ENCODE measurements at regions of chr6 and their contacts with region 1.

Region 1: GRCh38 chr6:75934643-75935472 is 137.6 kb downstream of the IMPG1 start:
- DNase-seq: peak; percentile 48
- ATAC-seq: peak; percentile 84
- H3K4me3 ChIP-seq: no peak overlapping the region
- H3K27ac ChIP-seq: no peak overlapping the region
- H3K4me1 ChIP-seq: peaks cover 0 to 4% of the 10 kb centered on the region in 2 experiments; a peak in 1 of 4 replicates
- H3K27me3 ChIP-seq: no peaks in the 10 kb centered on the region
- CTCF ChIP-seq: peak; percentile 62 to 87 (median 71)
- POLR2A ChIP-seq: no peak
- RAD21 ChIP-seq: peak; percentile 87

Region 2: DNA sequence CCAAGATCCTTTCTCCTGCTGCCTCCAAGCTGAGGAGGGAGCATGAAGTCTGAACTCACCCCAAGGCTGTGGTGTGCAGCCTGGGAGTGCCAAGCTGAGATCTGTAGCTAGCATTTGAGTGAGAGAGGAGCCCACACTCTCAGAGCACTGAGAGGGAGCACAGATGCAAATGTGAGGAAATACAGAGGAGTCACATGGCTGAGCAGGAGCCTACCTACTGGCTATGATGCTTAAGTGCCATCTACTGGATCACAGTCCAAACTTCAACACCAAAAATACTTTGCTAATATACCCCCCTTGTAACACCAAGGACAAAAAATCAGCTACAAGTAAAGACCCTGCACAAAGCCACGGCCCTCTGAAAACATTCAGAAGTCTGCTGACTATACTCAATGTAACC is 232.0 kb after region 1 on chr6:
- CTCF ChIA-PET with region 1: interaction called, 29 read pairs
- POLR2A ChIA-PET with region 1: no interaction called
- RAD21 ChIA-PET with region 1: interaction called in 1 of 2 experiments, 3 read pairs
- intact Hi-C with region 1: loop called (anchors 2 kb)
- DNase-seq: no peak
- ATAC-seq: peak; percentile 72
- H3K4me3 ChIP-seq: no peak overlapping the region
- H3K27ac ChIP-seq: no peak overlapping the region
- H3K4me1 ChIP-seq: no peaks in the 10 kb centered on the region
- H3K27me3 ChIP-seq: no peaks in the 10 kb centered on the region
- CTCF ChIP-seq: peak in 2 of 3 experiments; percentile 11 to 17; a peak in 3 of 6 replicates
- POLR2A ChIP-seq: no peak
- RAD21 ChIP-seq: peak; percentile 55

Region 3: DNA sequence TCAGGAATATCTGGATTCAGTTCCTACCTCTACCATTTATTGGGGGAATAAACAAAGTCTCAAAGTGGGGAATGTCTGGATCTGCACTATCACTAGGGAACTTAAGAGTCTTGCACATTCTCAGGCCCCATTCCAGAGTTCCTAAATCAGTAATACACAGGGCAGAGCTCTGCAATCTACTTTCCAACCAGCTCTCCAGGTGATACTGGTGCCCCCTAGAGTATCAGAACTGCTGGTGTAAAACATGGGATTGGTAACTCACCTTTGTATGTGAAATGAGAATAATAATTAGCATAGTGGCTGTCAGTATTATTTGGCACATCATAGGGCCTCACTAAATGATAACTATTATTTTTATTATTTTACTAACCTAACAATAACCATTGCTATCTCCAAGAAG is 416.4 kb after region 1 on chr6:
- CTCF ChIA-PET with region 1: interaction called, 7 read pairs
- POLR2A ChIA-PET with region 1: no interaction called
- RAD21 ChIA-PET with region 1: interaction called in 1 of 2 experiments, 3 read pairs
- intact Hi-C with region 1: loop called (anchors 1 kb)
- DNase-seq: peak; percentile 34
- ATAC-seq: peak; percentile 92
- H3K4me3 ChIP-seq: no peak overlapping the region
- H3K27ac ChIP-seq: no peak overlapping the region
- H3K4me1 ChIP-seq: no peaks in the 10 kb centered on the region
- H3K27me3 ChIP-seq: no peaks in the 10 kb centered on the region
- CTCF ChIP-seq: peak; percentile 50 to 73 (median 64); a peak in 5 of 6 replicates
- POLR2A ChIP-seq: no peak
- RAD21 ChIP-seq: peak; percentile 68

Region 4: DNA sequence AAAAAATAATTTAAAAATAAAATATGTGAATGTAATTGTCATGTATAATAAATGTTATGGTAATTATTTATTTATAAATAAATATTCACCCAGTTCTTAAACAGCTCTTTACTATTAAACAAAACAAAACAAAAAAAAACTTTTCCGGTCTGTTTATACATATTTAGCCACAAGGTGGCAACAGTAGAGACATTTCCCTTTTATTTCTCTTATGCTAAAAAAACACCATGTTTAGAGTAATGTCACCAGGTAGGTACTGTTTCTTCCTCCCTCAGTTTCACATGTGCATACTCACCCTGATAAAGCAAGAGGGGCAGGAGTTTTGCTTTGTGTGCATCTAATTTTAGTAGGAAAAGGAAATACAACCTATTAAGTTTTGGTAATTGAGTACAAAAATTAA is 748.0 kb after region 1 on chr6:
- CTCF ChIA-PET with region 1: interaction called, 7 read pairs
- POLR2A ChIA-PET with region 1: no interaction called
- RAD21 ChIA-PET with region 1: no interaction called
- intact Hi-C with region 1: loop called (anchors 10 kb)
- DNase-seq: peak; percentile 12
- ATAC-seq: no peak
- H3K4me3 ChIP-seq: no peak overlapping the region
- H3K27ac ChIP-seq: no peak overlapping the region
- H3K4me1 ChIP-seq: no peaks in the 10 kb centered on the region
- H3K27me3 ChIP-seq: no peaks in the 10 kb centered on the region
- CTCF ChIP-seq: peak; percentile 40 to 46 (median 44); a peak in 5 of 6 replicates
- POLR2A ChIP-seq: no peak
- RAD21 ChIP-seq: peak; percentile 25; the same call in 1 of the 2 replicates

Region 5: DNA sequence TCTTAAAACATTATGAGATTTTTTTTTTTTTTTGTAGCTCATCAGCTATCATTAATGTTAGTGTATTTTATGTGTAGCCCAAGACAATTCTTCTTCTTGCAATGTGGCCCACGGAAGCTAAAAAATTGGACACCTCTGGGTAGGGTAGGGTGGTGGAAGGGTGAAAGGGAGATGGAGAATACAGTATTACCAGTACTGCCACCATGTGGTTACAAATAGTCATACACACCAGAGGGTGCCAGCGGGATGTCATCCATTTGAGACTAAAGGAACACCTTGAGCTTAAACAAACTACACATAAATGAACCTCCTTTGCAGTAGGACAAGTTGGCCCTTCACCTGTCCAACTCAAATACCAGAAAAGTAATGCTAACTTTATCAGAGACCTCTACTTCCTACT is 926.5 kb after region 1 on chr6:
- CTCF ChIA-PET with region 1: no interaction called
- POLR2A ChIA-PET with region 1: no interaction called
- RAD21 ChIA-PET with region 1: no interaction called
- intact Hi-C with region 1: loop called (anchors 10 kb)
- DNase-seq: peak; percentile 7
- ATAC-seq: peak; percentile 85
- H3K4me3 ChIP-seq: no peak overlapping the region
- H3K27ac ChIP-seq: no peak overlapping the region
- H3K4me1 ChIP-seq: no peaks in the 10 kb centered on the region
- H3K27me3 ChIP-seq: no peaks in the 10 kb centered on the region
- CTCF ChIP-seq: peak; percentile 15 to 48 (median 40); a peak in 3 of 6 replicates
- POLR2A ChIP-seq: no peak
- RAD21 ChIP-seq: peak; percentile 27

Region 6: DNA sequence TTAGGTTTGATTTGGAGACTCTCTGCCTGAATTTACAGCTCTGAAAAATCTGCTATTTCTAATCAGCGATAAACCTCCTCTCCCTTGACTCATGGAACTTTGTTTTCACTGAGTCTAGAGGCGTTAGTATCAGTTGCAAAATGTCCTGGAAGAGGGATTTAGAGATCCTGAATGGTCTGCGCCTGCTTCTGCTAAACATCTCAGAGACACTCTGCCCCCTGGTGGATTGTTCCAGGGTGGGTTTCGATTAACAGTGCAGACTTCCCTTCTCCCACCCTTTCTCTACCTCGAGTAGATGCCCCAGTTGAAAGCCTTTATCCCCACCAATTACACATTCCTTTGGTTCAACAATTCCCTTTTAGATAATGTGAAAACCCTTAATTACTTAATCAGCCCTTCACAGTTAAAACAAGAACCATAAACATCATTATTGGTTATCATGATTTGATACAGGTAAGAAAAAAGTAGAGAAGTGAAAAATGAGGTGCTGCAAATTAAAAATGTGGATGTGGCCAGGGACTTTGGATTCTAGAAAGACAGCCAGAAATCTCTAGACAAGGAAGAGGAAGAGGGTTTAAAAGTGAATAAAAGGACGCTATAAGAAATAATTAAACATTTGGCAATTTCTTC is 1523.0 kb after region 1 on chr6:
- CTCF ChIA-PET with region 1: no interaction called
- POLR2A ChIA-PET with region 1: no interaction called
- RAD21 ChIA-PET with region 1: no interaction called
- intact Hi-C with region 1: loop called (anchors 1 kb)
- DNase-seq: peak; percentile 84
- ATAC-seq: peak; percentile 89
- H3K4me3 ChIP-seq: no peak overlapping the region
- H3K27ac ChIP-seq: no peak overlapping the region
- H3K4me1 ChIP-seq: peaks cover 12 to 26% of the 10 kb centered on the region in 2 experiments
- H3K27me3 ChIP-seq: no peaks in the 10 kb centered on the region
- CTCF ChIP-seq: peak; percentile 61 to 71 (median 68); a peak in 5 of 6 replicates
- POLR2A ChIP-seq: no peak
- RAD21 ChIP-seq: peak; percentile 78

Measured in HCT116 (cell line).